ENCODE measurements at regions of chr13 and their contacts with region 1.

Region 1: DNA sequence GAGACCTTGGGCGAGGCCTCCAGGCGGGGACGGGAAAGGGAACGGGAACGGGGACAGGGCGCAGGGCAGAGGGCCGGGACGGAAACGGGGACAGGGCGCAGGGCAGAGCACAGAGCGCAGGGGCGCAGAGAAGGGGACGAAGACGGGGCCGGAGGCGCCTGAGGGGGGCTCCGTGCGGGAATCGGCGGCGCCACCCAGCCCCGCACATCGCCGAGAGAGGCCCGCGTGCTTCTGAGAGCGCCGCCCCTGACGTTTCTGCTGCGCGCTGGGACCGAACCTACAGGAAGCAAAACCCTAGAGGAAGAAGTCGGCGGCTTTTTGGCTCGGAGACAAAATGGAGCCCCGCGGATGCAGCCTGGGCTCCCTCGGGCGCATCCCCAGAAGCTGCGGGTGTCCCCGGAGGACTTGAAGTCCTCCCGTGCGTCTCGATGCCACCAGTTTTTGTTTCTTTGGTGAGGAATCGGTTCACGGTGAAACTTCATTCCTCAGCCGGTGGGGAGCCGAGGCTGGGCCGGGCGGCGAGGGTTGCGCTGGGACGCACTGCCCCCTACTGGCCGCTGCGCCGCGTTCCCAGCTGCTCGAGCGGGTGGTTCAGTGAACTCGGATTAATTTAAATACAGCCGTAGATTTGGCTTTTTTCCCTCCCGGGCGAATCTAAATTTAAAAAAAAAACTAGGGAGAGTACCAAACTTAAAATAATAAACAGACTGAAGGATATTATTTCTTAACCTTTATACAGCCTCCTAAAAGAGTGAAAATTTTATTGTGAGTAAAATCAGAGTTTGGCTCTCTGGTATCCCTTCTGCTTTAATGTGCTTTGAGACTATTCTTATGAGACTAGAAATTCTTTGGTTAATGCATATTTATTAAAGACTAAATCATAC is 350.0 kb upstream of the ARGLU1 start:
- DNase-seq: peak; percentile 73
- H3K4me3 ChIP-seq: peak overlapping the region; percentile 56
- H3K27ac ChIP-seq: peak overlapping the region; percentile 29
- H3K4me1 ChIP-seq: peaks cover 13% of the 10 kb centered on the region
- H3K27me3 ChIP-seq: peaks cover 10% of the 10 kb centered on the region
- CTCF ChIP-seq: peak; percentile 99

Region 2: DNA sequence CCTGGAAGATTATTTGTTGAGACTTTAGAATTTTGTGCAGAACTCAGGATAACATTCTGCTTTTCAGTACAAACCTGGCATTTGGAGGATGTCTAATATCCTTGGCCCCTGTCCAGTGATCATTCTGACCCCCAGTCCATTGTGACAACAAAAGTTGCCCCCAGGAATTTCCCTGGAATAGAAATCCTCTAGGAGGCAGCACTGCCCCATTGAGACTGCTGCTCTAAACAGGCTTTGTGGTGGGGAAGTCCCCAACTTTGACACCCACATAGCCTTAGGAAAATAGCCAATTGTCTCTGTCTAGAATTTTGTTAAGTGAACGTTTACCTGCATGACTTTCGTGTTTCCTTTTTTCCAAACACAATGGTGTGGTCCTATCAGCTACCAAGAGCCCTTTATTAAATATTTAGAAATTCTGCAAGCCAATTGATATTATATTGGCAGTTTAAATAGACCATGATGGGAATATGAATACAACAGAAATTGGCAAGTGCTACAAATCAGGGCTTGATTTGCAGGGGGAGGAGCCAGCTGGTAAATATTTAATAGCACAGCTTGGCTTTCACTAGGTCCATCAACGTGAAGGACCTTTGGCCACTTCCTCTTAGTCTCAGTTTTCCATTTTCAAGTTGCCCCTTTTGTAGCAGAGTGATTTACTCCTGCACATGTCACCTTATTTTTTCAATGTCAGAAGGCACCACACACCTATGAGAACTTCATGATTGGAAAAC is 834.1 kb before region 1 on chr13:
- CTCF ChIA-PET with region 1: no interaction called
- POLR2A ChIA-PET with region 1: no interaction called
- intact Hi-C with region 1: loop called (anchors 10 kb)
- DNase-seq: peak; percentile 5
- H3K4me3 ChIP-seq: no peak overlapping the region
- H3K27ac ChIP-seq: no peak overlapping the region
- H3K4me1 ChIP-seq: no peaks in the 10 kb centered on the region
- H3K27me3 ChIP-seq: no peaks in the 10 kb centered on the region
- CTCF ChIP-seq: peak; percentile 38

Region 3: GRCh38 chr13:106796280-106797047 is 121.5 kb before region 1 on chr13:
- CTCF ChIA-PET with region 1: no interaction called
- POLR2A ChIA-PET with region 1: no interaction called
- intact Hi-C with region 1: no loop called
- DNase-seq: no peak
- H3K4me3 ChIP-seq: no peak overlapping the region
- H3K27ac ChIP-seq: no peak overlapping the region
- H3K4me1 ChIP-seq: no peaks in the 10 kb centered on the region
- H3K27me3 ChIP-seq: peaks cover 42% of the 10 kb centered on the region
- CTCF ChIP-seq: no peak

Region 4: DNA sequence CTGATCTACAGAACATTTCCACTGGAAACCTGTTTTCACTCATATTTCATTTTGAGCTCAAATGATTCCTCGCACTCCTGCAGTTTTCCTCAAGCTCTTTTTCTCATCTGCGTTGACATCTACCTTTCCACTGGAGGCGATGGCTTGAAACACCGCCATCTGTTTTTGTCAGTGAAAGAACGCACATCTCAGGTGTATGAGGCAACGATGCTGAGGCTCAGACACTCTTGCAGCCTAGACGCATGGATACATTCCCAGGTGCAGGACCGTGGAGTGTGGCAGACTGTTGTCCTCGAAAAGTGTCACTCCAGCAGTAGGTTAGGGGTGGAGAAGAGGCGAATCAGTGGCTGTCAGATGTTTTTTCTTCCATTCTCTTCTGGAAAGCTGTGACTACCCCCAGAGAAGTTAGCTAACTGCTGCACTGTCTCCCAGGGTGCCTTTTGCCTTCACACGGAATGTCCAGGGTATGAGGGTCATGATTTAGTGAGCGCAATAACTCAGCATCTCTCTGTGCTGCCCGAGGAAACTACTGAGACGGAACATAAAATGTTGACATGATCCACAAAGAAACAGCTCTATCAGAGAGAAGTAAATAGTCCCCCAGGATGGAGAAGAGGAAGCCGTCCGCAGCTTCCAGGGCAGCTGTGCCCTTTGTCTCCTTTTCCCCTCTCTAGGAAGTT is 96.1 kb before region 1 on chr13:
- CTCF ChIA-PET with region 1: no interaction called
- POLR2A ChIA-PET with region 1: no interaction called
- intact Hi-C with region 1: no loop called
- DNase-seq: no peak
- H3K4me3 ChIP-seq: no peak overlapping the region
- H3K27ac ChIP-seq: no peak overlapping the region
- H3K4me1 ChIP-seq: no peaks in the 10 kb centered on the region
- H3K27me3 ChIP-seq: peaks cover 28% of the 10 kb centered on the region
- CTCF ChIP-seq: no peak

Region 5: GRCh38 chr13:107124129-107124718 is 206.3 kb after region 1 on chr13:
- CTCF ChIA-PET with region 1: no interaction called
- POLR2A ChIA-PET with region 1: no interaction called
- intact Hi-C with region 1: loop called (anchors 10 kb)
- DNase-seq: peak; percentile 22
- H3K4me3 ChIP-seq: no peak overlapping the region
- H3K27ac ChIP-seq: no peak overlapping the region
- H3K4me1 ChIP-seq: no peaks in the 10 kb centered on the region
- H3K27me3 ChIP-seq: no peaks in the 10 kb centered on the region
- CTCF ChIP-seq: peak; percentile 60